ENCODE measurements at regions of chr7 and their contacts with region 1.

Region 1: DNA sequence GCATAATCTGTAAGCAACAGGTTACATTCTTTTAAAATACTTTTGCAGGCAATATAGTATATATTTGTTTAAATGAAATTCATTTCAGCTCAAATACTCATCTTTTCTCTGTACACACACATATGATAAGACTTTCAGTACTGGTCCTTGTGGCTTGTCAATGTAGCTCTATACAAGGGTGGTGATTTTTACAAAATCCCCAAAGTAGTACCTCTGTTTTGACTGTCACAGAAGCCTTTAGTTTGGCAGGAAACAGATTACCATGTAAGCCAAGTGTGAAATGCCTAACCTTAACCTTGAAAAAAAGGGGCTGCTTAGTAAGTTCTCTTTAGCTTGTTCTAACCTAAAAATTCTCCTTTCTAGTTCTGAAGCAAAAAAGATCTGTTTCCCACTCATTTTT is 87.9 kb downstream of the KCND2 start:
- DNase-seq: no peak
- H3K4me3 ChIP-seq: no peak overlapping the region
- H3K27ac ChIP-seq: no peak overlapping the region
- H3K4me1 ChIP-seq: no peaks in the 10 kb centered on the region
- H3K27me3 ChIP-seq: no peaks in the 10 kb centered on the region
- CTCF ChIP-seq: no peak
- POLR2A ChIP-seq: no peak

Region 2: DNA sequence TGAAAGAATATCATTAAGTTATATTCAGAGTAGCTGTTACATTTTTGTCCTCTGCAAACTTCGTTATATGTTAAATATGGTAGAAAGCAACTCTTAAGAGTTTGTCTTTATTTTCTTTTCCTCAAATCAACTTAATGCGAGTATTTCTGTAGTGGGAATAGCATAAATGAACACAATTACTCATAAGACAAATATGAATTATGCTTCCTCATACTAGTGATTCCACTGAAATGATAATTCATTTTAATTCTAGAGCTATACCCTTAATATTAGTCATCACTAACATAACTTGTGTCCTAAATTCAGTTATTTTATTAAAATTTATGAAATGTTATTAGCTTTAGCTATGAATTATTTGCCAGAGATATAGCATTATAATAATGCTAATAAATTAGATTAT is 908.5 kb before region 1 on chr7:
- intact Hi-C with region 1: no loop called
- DNase-seq: no peak
- H3K4me3 ChIP-seq: no peak overlapping the region
- H3K27ac ChIP-seq: no peak overlapping the region
- H3K4me1 ChIP-seq: no peaks in the 10 kb centered on the region
- H3K27me3 ChIP-seq: no peaks in the 10 kb centered on the region
- CTCF ChIP-seq: no peak
- POLR2A ChIP-seq: no peak

Region 3: DNA sequence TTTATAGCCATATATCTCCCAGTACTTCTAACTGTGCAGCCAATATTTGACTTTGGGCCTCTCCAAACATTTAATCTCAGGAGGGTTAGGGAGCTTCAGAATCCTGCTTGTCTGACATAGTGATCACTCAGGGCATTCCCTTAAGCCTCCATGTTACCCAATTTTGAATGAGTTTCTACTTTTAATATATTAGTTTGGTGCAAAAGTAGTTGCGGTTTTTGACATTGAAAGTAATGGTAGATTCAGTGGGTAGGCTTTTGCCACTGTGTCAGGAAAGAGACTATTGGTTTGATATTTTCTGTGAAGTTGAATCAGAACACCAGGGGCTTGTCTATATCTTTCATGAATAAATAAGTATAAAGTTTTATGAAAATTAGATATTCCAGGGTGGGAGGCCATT is 1426.1 kb after region 1 on chr7:
- intact Hi-C with region 1: loop called (anchors 10 kb)
- DNase-seq: no peak
- H3K4me3 ChIP-seq: no peak overlapping the region
- H3K27ac ChIP-seq: no peak overlapping the region
- H3K4me1 ChIP-seq: no peaks in the 10 kb centered on the region
- H3K27me3 ChIP-seq: no peaks in the 10 kb centered on the region
- CTCF ChIP-seq: no peak
- POLR2A ChIP-seq: no peak

Measured in breast epithelium (tissue), 4 donors.